GM13977 (cell line): ENCODE measurements at regions of chr14 and their contacts with region 1.

Region 1: DNA sequence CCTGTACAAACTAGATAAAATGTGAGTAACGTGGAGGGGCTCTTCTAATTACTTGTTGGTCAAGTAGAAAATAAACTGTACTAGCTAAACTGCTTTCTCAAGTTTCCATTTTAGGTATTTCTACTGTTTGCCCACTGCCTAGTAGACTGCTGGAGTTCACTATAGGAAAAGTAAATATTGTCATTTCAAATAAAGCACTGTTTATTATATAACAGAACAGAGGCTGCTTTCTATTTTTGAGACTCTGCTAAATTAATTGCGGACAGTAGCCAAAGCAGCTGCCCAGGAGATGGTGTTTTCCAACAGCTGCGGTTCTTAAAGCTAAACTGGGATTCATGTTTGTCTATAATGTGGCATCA is 15.9 kb upstream of the SIX1 start:
- DNase-seq: no peak
- CTCF ChIP-seq: no peak

Region 2: GRCh38 chr14:60734465-60735242 is 69.5 kb after region 1 on chr14 and contains the start of gene MNAT1:
- in situ Hi-C with region 1: no loop called
- DNase-seq: peak; percentile 59
- CTCF ChIP-seq: no peak

Region 3: DNA sequence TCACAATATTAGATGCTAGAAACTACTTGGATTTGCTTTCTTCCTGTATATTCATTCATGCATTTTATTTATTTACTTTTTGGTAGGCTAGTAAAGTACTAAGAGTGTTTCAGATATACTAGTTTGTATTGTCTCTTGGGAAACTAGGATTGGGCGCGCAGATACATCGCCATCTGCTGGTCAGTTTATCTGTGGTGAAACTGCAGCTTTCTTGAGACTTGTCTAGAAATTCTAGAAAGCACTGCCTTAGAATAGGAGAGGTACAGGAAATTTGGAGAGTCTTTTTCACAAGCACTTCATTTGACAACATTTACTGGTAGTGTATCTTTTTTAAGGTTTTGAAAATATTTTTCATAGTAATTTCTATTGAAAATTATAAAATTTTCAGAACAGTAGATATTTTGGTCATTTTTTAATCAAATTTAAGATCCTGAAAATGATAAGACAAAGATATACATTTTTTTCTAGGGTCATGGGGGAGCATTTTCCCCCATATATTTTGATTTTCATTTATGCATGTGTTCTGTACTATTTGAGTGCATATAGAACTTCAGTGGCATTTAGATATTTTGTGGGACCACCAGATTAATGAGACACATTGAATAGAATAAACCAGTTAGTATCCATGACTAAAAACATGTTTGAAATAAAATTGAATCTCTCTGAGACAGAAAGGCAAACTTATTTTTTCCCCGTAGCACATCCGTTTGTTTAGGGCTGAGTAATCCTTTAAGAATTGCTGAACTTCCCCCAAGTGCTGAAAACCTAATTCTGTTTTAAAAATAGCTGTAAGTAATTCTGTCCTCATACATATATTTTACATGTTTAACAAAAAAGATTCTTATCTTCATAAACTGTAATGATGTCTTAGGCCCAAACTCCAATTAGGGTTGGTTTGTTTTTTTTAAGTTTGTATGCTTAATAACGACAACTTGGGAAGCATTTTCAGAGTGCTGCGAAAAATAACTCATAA is 360.4 kb after region 1 on chr14:
- in situ Hi-C with region 1: loop called (anchors 10 kb)
- DNase-seq: peak; percentile 50
- CTCF ChIP-seq: peak; percentile 84